ENCODE measurements at regions of chr10 and their contacts with region 1.

Region 1: DNA sequence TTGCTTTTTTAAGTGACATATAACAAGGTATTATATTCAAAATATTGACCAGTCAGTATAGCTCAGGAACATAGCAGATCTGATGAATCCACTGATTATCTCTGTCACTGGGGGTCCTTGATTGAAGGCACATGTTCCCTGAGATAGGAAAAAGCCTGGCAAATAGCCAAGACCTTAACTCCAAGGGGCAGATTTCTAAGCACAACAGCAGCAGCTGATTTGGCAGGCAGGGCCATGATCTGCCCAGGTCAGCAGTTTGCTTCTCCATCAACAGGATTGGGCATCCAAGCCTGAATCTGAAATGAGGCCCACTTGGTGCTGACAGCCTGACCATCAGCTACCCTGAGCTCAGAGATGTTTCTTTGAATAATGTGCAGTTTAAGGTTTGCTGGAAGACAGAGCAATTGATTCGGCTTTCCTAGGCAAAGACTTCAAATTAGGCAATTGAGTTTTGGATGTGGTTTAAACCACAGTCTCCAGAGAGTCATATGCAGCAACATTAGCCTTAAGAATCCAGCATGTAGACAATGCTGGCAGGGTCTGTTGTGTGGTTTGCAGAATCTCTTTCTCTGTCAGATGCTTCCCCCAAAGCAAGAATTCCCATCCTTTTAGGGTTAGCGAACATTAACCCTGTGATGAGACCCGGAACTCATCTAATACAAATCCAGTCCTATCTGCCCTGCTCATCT is 352.7 kb downstream of the ADRA2A start:
- DNase-seq: no peak
- H3K4me3 ChIP-seq: no peak overlapping the region
- H3K27ac ChIP-seq: no peak overlapping the region
- H3K4me1 ChIP-seq: no peaks in the 10 kb centered on the region
- H3K27me3 ChIP-seq: no peaks in the 10 kb centered on the region
- CTCF ChIP-seq: no peak

Region 2: DNA sequence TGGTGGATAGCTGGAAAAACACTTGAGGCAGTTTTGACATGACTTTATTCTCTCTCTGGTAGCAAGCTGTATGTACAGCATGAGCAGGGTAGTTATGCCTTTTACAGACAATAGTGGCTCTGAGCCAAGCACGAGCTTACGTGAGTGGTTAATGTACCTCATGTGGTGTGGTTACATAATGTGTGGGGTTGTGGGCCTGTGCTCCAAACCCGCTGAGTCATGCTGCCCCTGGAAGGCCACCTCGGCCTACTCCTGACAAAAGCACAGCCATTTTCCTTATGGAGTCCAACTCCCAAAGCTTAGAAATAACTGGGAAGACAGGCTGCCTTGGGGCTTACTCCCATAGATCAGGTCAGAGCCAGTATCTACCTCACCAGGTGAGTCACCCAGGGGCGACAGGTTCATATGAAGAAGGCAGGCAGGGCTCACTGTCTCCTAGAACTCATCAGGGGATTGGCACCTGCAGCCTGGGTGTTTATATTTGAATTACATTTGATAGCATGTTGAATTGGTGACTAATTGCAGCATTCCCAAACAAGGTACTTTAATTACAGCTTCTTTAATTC is 51.9 kb after region 1 on chr10:
- CTCF ChIA-PET with region 1: no interaction called
- dilution Hi-C with region 1: loop called (anchors 5 kb)
- in situ Hi-C with region 1: no loop called
- intact Hi-C with region 1: no loop called
- DNase-seq: peak; percentile 58
- H3K4me3 ChIP-seq: no peak overlapping the region
- H3K27ac ChIP-seq: peak overlapping the region; percentile 38
- H3K4me1 ChIP-seq: peaks cover 23% of the 10 kb centered on the region
- H3K27me3 ChIP-seq: no peaks in the 10 kb centered on the region
- CTCF ChIP-seq: no peak

Measured in mammary epithelial cell (primary cell).